ENCODE measurements at regions of chr10 and their contacts with region 1.

Region 1: GRCh38 chr10:21533467-21534279 is at the start of gene MLLT10:
- DNase-seq: peak; percentile 96
- ATAC-seq: peak; percentile 87
- H3K4me3 ChIP-seq: peak within 1 kb of the TSS; percentile 58 to 98 (median 84)
- H3K4me3 Mint-ChIP-seq: peak within 1 kb of the TSS; percentile 94
- H3K27ac ChIP-seq: peak within 1 kb of the TSS; percentile 69 to 82
- H3K27ac Mint-ChIP-seq: peak within 1 kb of the TSS; percentile 95
- H3K4me1 ChIP-seq: peaks cover 12 to 16% of the 10 kb centered on the region in 2 donors
- H3K4me1 Mint-ChIP-seq: peaks cover 17% of the 10 kb centered on the region
- H3K27me3 ChIP-seq: peaks cover 0 to 10% (median under 1%) of the 10 kb centered on the region in 4 experiments
- H3K27me3 Mint-ChIP-seq: peaks cover 7% of the 10 kb centered on the region
- CTCF ChIP-seq: no peak
- total RNA-seq, gene MLLT10: 66.5 and 70.5 TPM in 2 replicates

Region 2: DNA sequence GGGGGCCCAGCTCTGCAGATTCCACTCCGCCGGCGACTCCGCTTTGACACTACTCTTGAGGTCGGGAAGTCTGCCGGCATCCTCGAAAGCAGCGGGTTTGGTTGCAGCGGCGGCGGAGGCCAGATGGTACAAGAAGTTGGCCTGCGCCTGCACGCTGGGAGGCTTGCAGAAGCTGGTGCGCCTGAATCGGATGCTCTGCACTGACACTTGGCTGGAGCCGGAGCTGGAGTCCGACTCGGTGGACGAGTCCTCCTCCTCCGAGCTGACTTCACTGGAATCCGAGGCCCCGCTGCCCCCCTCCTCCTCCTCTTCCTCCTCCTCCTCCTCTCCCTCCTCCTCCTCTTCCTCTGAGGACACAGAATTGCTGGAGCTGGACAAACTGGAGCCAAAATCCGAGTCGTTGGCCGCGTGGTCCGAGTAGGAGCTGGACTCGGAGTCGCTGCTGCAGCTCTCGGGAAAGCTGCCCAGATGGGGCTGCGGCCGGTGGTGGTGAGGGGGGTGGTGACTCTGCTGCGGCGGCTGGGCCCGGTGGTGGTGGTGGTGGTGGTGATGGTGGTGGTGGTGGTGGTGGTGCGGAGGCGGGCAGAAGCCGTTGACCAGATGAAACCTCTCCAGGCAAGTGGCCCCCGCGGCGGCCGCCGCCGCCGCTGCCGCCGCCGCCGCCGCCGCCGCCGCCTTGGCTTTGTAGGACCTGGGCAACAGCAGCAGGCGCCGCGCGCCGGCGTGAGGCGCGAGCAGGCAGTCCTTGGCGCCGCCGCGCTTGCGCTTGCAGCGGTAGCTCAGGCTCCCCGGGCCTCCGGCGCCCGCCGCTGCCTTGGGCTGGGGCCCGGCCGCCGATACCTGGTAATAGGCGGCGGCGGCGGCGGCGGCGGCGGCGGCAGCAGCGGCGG is 17.2 kb before region 1 on chr10:
- CTCF ChIA-PET with region 1: interaction called, 4 read pairs
- POLR2A ChIA-PET with region 1: interaction called, 7 read pairs
- intact Hi-C with region 1: loop called (anchors 2 kb)
- DNase-seq: peak; percentile 74
- ATAC-seq: peak; percentile 64
- H3K4me3 ChIP-seq: peak overlapping the region in 3 of 5 experiments; percentile 39 to 56 (median 53)
- H3K4me3 Mint-ChIP-seq: peak overlapping the region; percentile 85
- H3K27ac ChIP-seq: no peak overlapping the region
- H3K27ac Mint-ChIP-seq: no peak overlapping the region
- H3K4me1 ChIP-seq: peaks cover 37 to 45% of the 10 kb centered on the region in 2 donors
- H3K4me1 Mint-ChIP-seq: peaks cover 36% of the 10 kb centered on the region
- H3K27me3 ChIP-seq: peaks cover 0 to 86% (median 76%) of the 10 kb centered on the region in 4 experiments
- H3K27me3 Mint-ChIP-seq: peaks cover 83% of the 10 kb centered on the region
- CTCF ChIP-seq: no peak

Region 3: GRCh38 chr10:21556527-21556926 is 22.9 kb after region 1 on chr10:
- CTCF ChIA-PET with region 1: no interaction called
- POLR2A ChIA-PET with region 1: no interaction called
- intact Hi-C with region 1: no loop called
- DNase-seq: no peak
- ATAC-seq: no peak
- H3K4me3 ChIP-seq: no peak overlapping the region
- H3K4me3 Mint-ChIP-seq: no peak overlapping the region
- H3K27ac ChIP-seq: no peak overlapping the region
- H3K27ac Mint-ChIP-seq: no peak overlapping the region
- H3K4me1 ChIP-seq: no peaks in the 10 kb centered on the region
- H3K4me1 Mint-ChIP-seq: peaks cover 5% of the 10 kb centered on the region
- H3K27me3 ChIP-seq: no peaks in the 10 kb centered on the region
- H3K27me3 Mint-ChIP-seq: no peaks in the 10 kb centered on the region
- CTCF ChIP-seq: no peak

Region 4: GRCh38 chr10:21572578-21572977 is 38.9 kb after region 1 on chr10:
- CTCF ChIA-PET with region 1: no interaction called
- POLR2A ChIA-PET with region 1: no interaction called
- intact Hi-C with region 1: no loop called
- DNase-seq: no peak
- ATAC-seq: no peak
- H3K4me3 ChIP-seq: no peak overlapping the region
- H3K4me3 Mint-ChIP-seq: no peak overlapping the region
- H3K27ac ChIP-seq: no peak overlapping the region
- H3K27ac Mint-ChIP-seq: no peak overlapping the region
- H3K4me1 ChIP-seq: peaks cover 3 to 11% of the 10 kb centered on the region in 2 donors
- H3K4me1 Mint-ChIP-seq: peaks cover 35% of the 10 kb centered on the region
- H3K27me3 ChIP-seq: no peaks in the 10 kb centered on the region
- H3K27me3 Mint-ChIP-seq: no peaks in the 10 kb centered on the region
- CTCF ChIP-seq: no peak

Region 5: GRCh38 chr10:22228943-22229801 is 695.5 kb after region 1 on chr10:
- CTCF ChIA-PET with region 1: no interaction called
- POLR2A ChIA-PET with region 1: no interaction called
- intact Hi-C with region 1: loop called (anchors 1 kb)
- DNase-seq: peak; percentile 96
- ATAC-seq: peak; percentile 81
- H3K4me3 ChIP-seq: peak overlapping the region; percentile 68 to 83 (median 81)
- H3K4me3 Mint-ChIP-seq: peak overlapping the region; percentile 90
- H3K27ac ChIP-seq: peak overlapping the region; percentile 66 to 77
- H3K27ac Mint-ChIP-seq: peak overlapping the region; percentile 100
- H3K4me1 ChIP-seq: no peaks in the 10 kb centered on the region
- H3K4me1 Mint-ChIP-seq: peaks cover 14% of the 10 kb centered on the region
- H3K27me3 ChIP-seq: no peaks in the 10 kb centered on the region
- H3K27me3 Mint-ChIP-seq: peaks cover 7% of the 10 kb centered on the region
- CTCF ChIP-seq: no peak

Measured in B cell (primary cell).